Vagina (tissue), 2 donors: ENCODE measurements at regions of chr17 and their contacts with region 1.

Region 1: DNA sequence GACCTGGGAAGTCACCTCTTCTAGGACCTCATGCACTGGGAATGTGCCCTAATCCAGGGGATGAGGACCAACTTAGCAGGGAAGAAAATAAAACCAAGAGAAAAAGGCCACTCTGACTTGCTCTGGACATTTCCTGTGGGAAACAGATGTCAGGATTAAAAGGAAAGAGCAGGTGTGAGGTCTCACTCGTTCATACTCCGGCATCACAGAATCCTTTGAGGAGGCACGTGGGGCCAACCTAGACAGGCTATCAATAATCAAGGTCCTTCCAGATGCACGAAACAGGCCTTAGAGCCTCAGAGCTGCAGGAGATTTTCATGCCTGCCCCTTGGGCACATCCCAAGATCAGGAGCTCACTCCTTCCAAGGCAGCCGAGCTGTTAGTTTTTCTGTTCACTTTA is 321.5 kb upstream of the CCL2 start:
- DNase-seq: no peak
- H3K4me3 ChIP-seq: no peak overlapping the region
- H3K27ac ChIP-seq: no peak overlapping the region
- H3K4me1 ChIP-seq: no peaks in the 10 kb centered on the region
- H3K27me3 ChIP-seq: no peaks in the 10 kb centered on the region
- CTCF ChIP-seq: no peak
- POLR2A ChIP-seq: no peak

Region 2: DNA sequence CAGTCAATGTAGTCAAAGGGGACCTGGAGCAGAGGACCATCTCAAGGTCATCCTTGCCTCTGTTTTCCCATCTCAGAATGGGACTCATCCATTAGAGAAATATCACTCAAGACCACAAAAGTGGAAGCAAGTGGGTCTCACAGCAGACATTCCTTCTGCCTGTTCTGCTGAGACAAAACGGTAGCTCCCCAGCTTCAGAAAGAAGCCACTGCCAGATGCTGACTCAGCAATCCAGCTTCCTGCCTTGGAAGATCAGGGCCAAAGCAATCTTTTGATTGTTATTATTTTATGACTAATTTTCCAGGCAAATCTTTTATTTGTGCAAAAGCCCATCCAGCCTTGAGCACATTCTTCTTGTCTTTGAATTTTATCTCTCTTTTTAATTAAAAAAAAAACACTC is 940.9 kb after region 1 on chr17:
- intact Hi-C with region 1: loop called (anchors 5 kb)
- DNase-seq: no peak
- H3K4me3 ChIP-seq: no peak overlapping the region
- H3K27ac ChIP-seq: no peak overlapping the region
- H3K4me1 ChIP-seq: no peaks in the 10 kb centered on the region
- H3K27me3 ChIP-seq: no peaks in the 10 kb centered on the region
- CTCF ChIP-seq: no peak
- POLR2A ChIP-seq: no peak